K562 (cell line): ENCODE measurements at regions of chr11 and their contacts with region 1.

Region 1: DNA sequence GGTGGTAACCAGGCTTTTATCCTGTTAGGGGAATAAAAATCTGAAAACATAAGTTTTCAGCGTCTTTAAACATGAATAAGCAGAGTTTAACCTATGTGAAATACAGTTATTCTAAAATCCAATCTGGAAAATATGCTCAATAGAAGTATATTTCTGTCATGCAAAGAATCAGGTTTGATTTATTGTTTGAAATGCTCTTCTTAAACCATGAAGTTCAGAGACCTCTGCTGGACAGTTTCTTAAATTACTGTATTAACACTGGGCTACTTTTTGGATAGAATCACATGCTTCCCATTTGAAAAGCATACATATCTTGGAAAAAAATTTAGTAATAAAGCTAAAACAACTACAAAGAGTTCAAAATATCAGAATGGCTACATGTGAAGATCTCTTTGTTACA is 25.4 kb downstream of the APIP start:
- DNase-seq: peak in 2 of 4 experiments; percentile 17 to 53
- ATAC-seq: peak; percentile 71
- H3K4me3 ChIP-seq: no peak overlapping the region
- H3K27ac ChIP-seq: no peak overlapping the region
- H3K4me1 ChIP-seq: no peaks in the 10 kb centered on the region
- H3K27me3 ChIP-seq: no peaks in the 10 kb centered on the region
- CTCF ChIP-seq: peak; percentile 33 to 69 (median 41); a peak in 4 of 6 replicates
- EP300 ChIP-seq: no peak
- POLR2A ChIP-seq: no peak
- RAD21 ChIP-seq: peak; percentile 90 to 92

Region 2: GRCh38 chr11:34366522-34366921 is 524.3 kb before region 1 on chr11:
- CTCF ChIA-PET with region 1: no interaction called
- POLR2A ChIA-PET with region 1: no interaction called
- in situ Hi-C with region 1: loop called (anchors 10 kb)
- intact Hi-C with region 1: no loop called
- DNase-seq: peak in 2 of 4 experiments; percentile 29 to 60
- ATAC-seq: no peak
- H3K4me3 ChIP-seq: no peak overlapping the region
- H3K27ac ChIP-seq: no peak overlapping the region
- H3K4me1 ChIP-seq: peaks cover 5 to 8% of the 10 kb centered on the region in 2 experiments; a peak in 3 of 5 replicates
- H3K27me3 ChIP-seq: no peaks in the 10 kb centered on the region
- CTCF ChIP-seq: peak; percentile 47 to 68 (median 56); a peak in 5 of 6 replicates
- EP300 ChIP-seq: no peak
- POLR2A ChIP-seq: no peak
- RAD21 ChIP-seq: peak; percentile 67 to 79

Region 3: DNA sequence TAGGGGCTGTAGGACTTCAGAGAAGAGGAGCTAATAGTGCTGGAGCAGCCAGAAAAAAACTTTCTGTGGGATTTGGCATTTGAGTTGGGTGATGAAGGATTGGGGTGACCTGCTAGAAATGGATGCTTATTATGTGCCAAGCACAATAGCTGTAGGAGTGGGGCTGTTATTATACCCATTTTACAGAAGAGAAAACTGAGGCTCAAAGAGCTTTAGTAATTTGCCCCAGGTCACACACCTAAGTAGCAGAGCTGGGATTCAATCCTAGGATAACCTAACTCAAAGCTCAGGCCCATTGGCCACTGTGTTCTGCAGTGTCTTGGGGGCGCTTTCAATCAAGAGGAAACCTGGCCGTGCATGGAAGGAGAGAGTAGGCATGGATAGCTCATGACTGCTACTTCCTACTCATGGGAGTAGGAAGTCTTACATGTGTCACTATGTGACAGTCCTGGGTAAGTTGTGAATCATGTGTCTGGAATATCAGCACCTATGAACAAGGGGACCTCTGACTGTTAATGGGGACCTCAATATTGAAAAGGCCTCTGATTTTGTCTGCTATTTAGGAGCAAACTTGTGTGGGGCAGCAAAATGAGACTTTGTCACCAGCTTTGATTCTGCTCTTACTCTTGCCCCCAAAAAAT is 371.1 kb before region 1 on chr11:
- CTCF ChIA-PET with region 1: no interaction called
- POLR2A ChIA-PET with region 1: no interaction called
- in situ Hi-C with region 1: loop called (anchors 5 kb)
- intact Hi-C with region 1: no loop called
- DNase-seq: no peak
- ATAC-seq: no peak
- H3K4me3 ChIP-seq: no peak overlapping the region
- H3K27ac ChIP-seq: no peak overlapping the region
- H3K4me1 ChIP-seq: peaks cover 0 to 2% of the 10 kb centered on the region in 2 experiments; a peak in 1 of 5 replicates
- H3K27me3 ChIP-seq: peaks cover 13 to 19% of the 10 kb centered on the region in 2 experiments; a peak in 4 of 5 replicates
- CTCF ChIP-seq: no peak
- EP300 ChIP-seq: no peak
- POLR2A ChIP-seq: no peak
- RAD21 ChIP-seq: no peak

Region 4: DNA sequence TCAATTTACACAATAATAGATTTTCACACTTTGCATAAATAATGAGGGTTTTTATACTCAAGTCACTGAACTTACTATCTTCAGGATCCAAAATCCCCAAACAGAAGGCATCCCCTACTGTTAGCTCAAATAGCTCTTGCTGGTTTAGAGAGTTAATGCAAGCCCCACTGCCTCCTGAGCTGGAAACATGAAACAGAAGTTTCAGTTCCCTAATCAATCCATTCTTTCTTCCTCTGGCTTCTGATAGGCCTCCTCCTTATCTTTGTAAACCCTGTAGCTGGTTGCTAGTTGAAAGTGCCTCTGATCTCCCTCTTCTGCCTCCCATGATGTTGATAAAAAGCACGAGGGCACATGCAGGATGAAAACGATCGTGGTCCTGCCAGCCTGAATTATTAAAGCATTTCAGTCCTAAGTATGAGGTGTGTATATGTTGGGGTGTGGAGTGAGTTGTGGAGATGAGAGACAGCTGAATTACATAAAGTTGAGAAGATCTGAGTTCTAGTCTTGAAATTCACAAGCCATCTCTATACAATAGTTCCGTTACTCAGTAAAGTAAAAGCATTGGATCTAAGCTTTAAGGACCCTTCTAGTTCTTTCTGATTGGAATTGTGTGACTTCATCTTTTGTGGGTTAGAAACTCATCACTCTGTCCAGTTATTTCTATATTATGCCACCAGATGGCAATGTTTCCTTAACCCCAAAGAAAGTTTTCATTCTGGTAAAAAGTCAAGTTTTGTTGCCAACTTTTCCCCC is 304.9 kb before region 1 on chr11:
- CTCF ChIA-PET with region 1: interaction called, 73 read pairs
- POLR2A ChIA-PET with region 1: interaction called, 3 read pairs
- in situ Hi-C with region 1: loop called (anchors 5 kb)
- intact Hi-C with region 1: loop called (anchors 1 kb)
- DNase-seq: peak; percentile 38 to 71 (median 50)
- ATAC-seq: peak; percentile 70
- H3K4me3 ChIP-seq: no peak overlapping the region
- H3K27ac ChIP-seq: peak overlapping the region; percentile 44; the same call in 2 of the 3 replicates
- H3K4me1 ChIP-seq: peaks cover 0 to 40% of the 10 kb centered on the region in 2 experiments; a peak in 3 of 5 replicates
- H3K27me3 ChIP-seq: peaks cover 0 to 3% of the 10 kb centered on the region in 2 experiments; a peak in 3 of 5 replicates
- CTCF ChIP-seq: peak; percentile 59 to 83 (median 65); a peak in 5 of 6 replicates
- EP300 ChIP-seq: peak; percentile 17; the same call in 1 of the 2 replicates
- POLR2A ChIP-seq: no peak
- RAD21 ChIP-seq: peak; percentile 96 to 97

Region 5: GRCh38 chr11:34840736-34841386 is 50.0 kb before region 1 on chr11:
- CTCF ChIA-PET with region 1: interaction called, 3 read pairs
- POLR2A ChIA-PET with region 1: no interaction called
- in situ Hi-C with region 1: no loop called
- intact Hi-C with region 1: loop called (anchors 5 kb)
- DNase-seq: peak; percentile 26 to 73 (median 46)
- ATAC-seq: peak; percentile 95
- H3K4me3 ChIP-seq: no peak overlapping the region
- H3K27ac ChIP-seq: no peak overlapping the region; the same call in 2 of the 3 replicates
- H3K4me1 ChIP-seq: no peaks in the 10 kb centered on the region
- H3K27me3 ChIP-seq: no peaks in the 10 kb centered on the region
- CTCF ChIP-seq: peak; percentile 64 to 74 (median 70)
- EP300 ChIP-seq: no peak
- POLR2A ChIP-seq: no peak
- RAD21 ChIP-seq: peak; percentile 18 to 63; a peak in 2 of 4 replicates